Activated CD8-positive, alpha-beta memory T cell treated with anti-CD3 and anti-CD28 coated beads, Interleukin-2, amount 10 ng/mL, durations not matched to agents 7 days and 5 days (primary cell): ENCODE measurements at regions of chr2 and their contacts with region 1.

Region 1: DNA sequence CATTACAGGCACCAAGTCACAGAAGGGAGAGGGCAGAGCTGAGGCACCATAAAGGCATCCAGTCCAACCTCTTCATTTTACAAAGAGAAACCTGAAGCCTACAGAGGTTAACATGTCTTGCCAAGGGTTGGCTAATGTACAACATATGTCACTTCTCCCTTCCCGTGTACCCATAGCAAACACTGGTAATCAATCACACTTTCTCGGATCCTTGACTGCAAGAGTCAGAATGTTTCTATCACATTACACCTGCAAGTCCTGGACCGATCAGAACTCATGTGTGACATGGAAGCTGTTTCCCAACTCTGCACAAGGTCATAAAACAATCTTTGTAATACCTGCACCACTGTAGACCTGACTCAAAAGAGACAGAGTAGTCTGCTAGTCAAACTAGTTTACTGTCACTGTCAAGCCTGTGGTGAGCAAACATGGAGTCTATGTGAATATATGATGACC is 6.0 kb downstream of the ANKRD44 start:
- DNase-seq: peak; percentile 70
- ATAC-seq: peak; percentile 34
- H3K4me3 Mint-ChIP-seq: peak overlapping the region; percentile 94
- H3K27ac Mint-ChIP-seq: peak overlapping the region; percentile 93
- H3K4me1 Mint-ChIP-seq: peaks cover 81% of the 10 kb centered on the region
- H3K27me3 Mint-ChIP-seq: no peaks in the 10 kb centered on the region

Region 2: GRCh38 chr2:197191177-197191939 is 113.2 kb before region 1 on chr2:
- CTCF ChIA-PET with region 1: interaction called, 49 read pairs
- DNase-seq: no peak
- ATAC-seq: peak; percentile 35
- H3K4me3 Mint-ChIP-seq: peak overlapping the region; percentile 44
- H3K27ac Mint-ChIP-seq: peak overlapping the region; percentile 78
- H3K4me1 Mint-ChIP-seq: peaks cover 73% of the 10 kb centered on the region
- H3K27me3 Mint-ChIP-seq: no peaks in the 10 kb centered on the region

Region 3: DNA sequence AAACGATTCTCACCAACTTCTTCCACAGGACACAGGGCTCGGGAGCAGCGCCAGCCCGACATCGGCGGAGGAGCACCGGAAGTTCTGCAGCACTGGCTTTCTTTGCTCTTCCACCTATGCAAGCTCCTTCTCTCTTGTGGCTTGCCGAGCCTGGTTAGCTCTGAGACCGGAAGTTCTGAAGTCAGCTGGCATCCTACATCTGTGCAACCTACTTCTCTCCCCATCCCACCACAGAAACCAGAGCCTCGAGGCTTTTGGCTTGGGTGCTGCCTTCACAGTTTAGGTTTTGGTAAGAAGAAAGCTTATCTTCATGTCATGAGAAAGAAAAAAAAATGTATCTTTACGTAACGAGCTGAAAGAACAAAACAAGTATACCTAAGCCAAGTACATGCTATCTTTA is 105.7 kb before region 1 on chr2:
- CTCF ChIA-PET with region 1: interaction called, 18 read pairs
- DNase-seq: peak; percentile 98
- ATAC-seq: peak; percentile 85
- H3K4me3 Mint-ChIP-seq: peak overlapping the region; percentile 72
- H3K27ac Mint-ChIP-seq: peak overlapping the region; percentile 86
- H3K4me1 Mint-ChIP-seq: peaks cover 89% of the 10 kb centered on the region
- H3K27me3 Mint-ChIP-seq: no peaks in the 10 kb centered on the region

Region 4: GRCh38 chr2:197293252-197294007 is 11.2 kb before region 1 on chr2:
- CTCF ChIA-PET with region 1: interaction called, 68 read pairs
- DNase-seq: peak; percentile 58
- ATAC-seq: peak; percentile 62
- H3K4me3 Mint-ChIP-seq: peak overlapping the region; percentile 73
- H3K27ac Mint-ChIP-seq: peak overlapping the region; percentile 90
- H3K4me1 Mint-ChIP-seq: peaks cover 91% of the 10 kb centered on the region
- H3K27me3 Mint-ChIP-seq: no peaks in the 10 kb centered on the region